MCF 10A (cell line): ENCODE measurements at regions of chr11 and their contacts with region 1.

Region 1: DNA sequence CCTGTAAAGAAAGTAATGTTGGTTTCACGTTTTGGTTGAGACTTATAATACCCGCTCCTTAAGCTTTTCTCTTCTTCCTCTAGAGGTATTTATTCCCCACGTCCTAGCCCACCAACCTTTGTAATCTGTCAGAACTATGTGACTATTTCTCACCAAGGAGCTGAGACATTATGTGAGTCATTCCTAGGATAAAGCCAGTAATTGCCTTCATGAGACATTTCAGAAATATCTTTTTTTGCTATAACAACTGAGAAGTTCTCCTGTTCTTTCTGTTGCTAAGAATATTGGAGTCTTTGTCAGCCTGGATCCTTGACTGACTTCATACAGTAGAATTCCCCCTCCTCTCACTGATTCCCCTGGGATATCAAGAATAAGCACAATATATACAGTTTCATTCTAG is 1497.0 kb upstream of the TENM4 start:
- DNase-seq: no peak
- H3K4me3 Mint-ChIP-seq: no peak overlapping the region
- H3K27ac Mint-ChIP-seq: no peak overlapping the region
- H3K4me1 Mint-ChIP-seq: no peaks in the 10 kb centered on the region
- H3K27me3 Mint-ChIP-seq: no peaks in the 10 kb centered on the region
- CTCF ChIP-seq: no peak

Region 2: DNA sequence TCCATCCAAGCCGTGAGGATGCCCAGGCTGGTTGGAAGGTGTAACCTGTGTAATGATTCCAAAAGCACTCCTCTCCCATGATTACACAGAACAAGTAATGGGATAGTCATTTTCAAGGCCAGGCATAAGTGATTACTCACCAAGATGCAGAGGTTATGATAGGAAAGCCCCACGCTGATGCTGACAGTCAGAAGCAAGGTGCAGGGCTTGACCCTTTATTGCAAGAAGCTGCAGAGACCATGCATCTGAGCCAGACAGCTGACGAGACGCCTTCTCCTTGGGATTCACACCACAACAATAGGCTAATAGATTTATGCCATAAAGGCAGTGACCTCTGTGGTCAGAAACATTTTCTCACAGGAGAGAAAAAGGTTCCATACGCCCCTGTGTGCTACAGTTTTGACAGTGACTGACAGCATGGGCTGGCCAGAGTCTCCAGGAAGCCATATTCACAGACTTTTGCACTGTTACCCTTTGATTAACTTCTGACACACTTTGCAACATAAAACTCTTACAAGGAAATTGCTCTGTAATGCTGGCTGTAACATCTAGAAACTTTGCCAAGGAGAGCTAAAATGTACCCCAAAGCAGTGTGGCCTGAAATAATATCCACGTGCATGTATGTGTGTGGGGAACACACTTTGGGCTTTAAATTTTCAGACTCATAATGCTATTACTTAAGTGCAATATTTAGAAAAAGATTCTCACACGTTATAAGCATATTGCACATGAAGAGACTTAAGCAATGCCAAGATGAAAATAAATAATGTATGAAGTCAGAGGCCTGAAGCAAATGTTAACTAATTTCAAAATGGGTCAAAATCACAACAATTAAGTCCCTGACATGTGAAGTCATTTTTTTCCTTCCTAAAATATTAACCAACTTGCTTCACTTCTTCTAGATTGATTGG is 418.0 kb before region 1 on chr11:
- CTCF ChIA-PET with region 1: no interaction called
- POLR2A ChIA-PET with region 1: no interaction called
- intact Hi-C with region 1: no loop called
- DNase-seq: no peak
- H3K4me3 Mint-ChIP-seq: no peak overlapping the region
- H3K27ac Mint-ChIP-seq: no peak overlapping the region
- H3K4me1 Mint-ChIP-seq: no peaks in the 10 kb centered on the region
- H3K27me3 Mint-ChIP-seq: no peaks in the 10 kb centered on the region
- CTCF ChIP-seq: no peak

Region 3: GRCh38 chr11:80925321-80925720 is 12.5 kb before region 1 on chr11:
- CTCF ChIA-PET with region 1: interaction called, 3 read pairs
- POLR2A ChIA-PET with region 1: interaction called, 10 read pairs
- intact Hi-C with region 1: no loop called
- DNase-seq: no peak
- H3K4me3 Mint-ChIP-seq: no peak overlapping the region
- H3K27ac Mint-ChIP-seq: peak overlapping the region; percentile 24
- H3K4me1 Mint-ChIP-seq: peaks cover 11% of the 10 kb centered on the region
- H3K27me3 Mint-ChIP-seq: no peaks in the 10 kb centered on the region
- CTCF ChIP-seq: no peak